WTC11 (cell line): ENCODE measurements at regions of chr4 and their contacts with region 1.

Region 1: GRCh38 chr4:6885951-6886557 is 23.6 kb upstream of the TBC1D14 start:
- DNase-seq: no peak
- ATAC-seq: no peak; the same call in 1 of the 2 replicates
- H3K4me3 Mint-ChIP-seq: no peak overlapping the region
- H3K27ac Mint-ChIP-seq: no peak overlapping the region
- H3K4me1 Mint-ChIP-seq: peaks cover 7% of the 10 kb centered on the region
- H3K27me3 Mint-ChIP-seq: no peaks in the 10 kb centered on the region
- CTCF ChIP-seq: no peak

Region 2: GRCh38 chr4:6909073-6909965 is 23.3 kb after region 1 on chr4 and contains the start of gene TBC1D14:
- CTCF ChIA-PET with region 1: interaction called, 11 read pairs
- POLR2A ChIA-PET with region 1: no interaction called
- DNase-seq: peak; percentile 85
- ATAC-seq: peak; percentile 83
- H3K4me3 Mint-ChIP-seq: peak within 1 kb of the TSS; percentile 95
- H3K27ac Mint-ChIP-seq: peak within 1 kb of the TSS; percentile 69
- H3K4me1 Mint-ChIP-seq: peaks cover 33% of the 10 kb centered on the region
- H3K27me3 Mint-ChIP-seq: peaks cover 12% of the 10 kb centered on the region
- CTCF ChIP-seq: no peak
- total RNA-seq, gene TBC1D14: 42.4 to 45.1 TPM (median 43.4 TPM) in 3 replicates

Region 3: GRCh38 chr4:6917461-6918271 is 31.6 kb after region 1 on chr4:
- CTCF ChIA-PET with region 1: interaction called, 12 read pairs
- POLR2A ChIA-PET with region 1: no interaction called
- DNase-seq: peak; percentile 69
- ATAC-seq: peak; percentile 78
- H3K4me3 Mint-ChIP-seq: no peak overlapping the region
- H3K27ac Mint-ChIP-seq: peak overlapping the region; percentile 81
- H3K4me1 Mint-ChIP-seq: peaks cover 32% of the 10 kb centered on the region
- H3K27me3 Mint-ChIP-seq: no peaks in the 10 kb centered on the region
- CTCF ChIP-seq: peak; percentile 39; the same call in 1 of the 2 replicates